ENCODE measurements at regions of chr10 and their contacts with region 1.

Region 1: DNA sequence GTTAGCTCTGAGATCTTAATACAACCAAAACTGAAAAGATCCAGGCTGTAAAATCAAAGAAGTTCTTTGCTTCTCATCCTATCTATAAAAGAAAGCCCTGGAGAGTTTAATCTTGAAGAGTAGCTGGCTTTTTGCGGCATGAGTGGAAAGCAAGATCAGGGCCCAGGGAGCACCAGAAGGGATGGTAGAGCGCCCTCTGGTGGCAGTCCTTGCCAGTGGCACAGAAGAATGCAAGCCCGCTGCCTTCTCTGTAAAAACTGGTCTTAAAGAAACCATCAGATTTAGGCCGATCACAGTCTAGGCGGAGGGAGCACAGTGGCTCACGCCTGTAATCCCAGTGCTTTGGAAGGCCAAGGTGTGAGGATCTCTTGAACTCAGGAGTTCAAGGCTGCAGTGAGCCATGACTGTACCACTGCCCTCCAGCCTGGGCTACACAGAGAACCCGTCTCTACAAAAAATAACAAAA is 35.6 kb downstream of the CPN1 start:
- DNase-seq: peak; percentile 88
- H3K4me3 ChIP-seq: no peak overlapping the region
- H3K27ac ChIP-seq: no peak overlapping the region
- H3K4me1 ChIP-seq: peaks cover 0 to 18% (median 4%) of the 10 kb centered on the region in 4 donors
- H3K27me3 ChIP-seq: no peaks in the 10 kb centered on the region
- CTCF ChIP-seq: peak; percentile 89 to 98 (median 96)
- EP300 ChIP-seq: no peak
- POLR2A ChIP-seq: no peak

Region 2: GRCh38 chr10:99845837-99846382 is 200.1 kb before region 1 on chr10:
- in situ Hi-C with region 1: loop called (anchors 5 to 10 kb)
- intact Hi-C with region 1: loop called (anchors 2 kb)
- DNase-seq: peak; percentile 79
- H3K4me3 ChIP-seq: peak overlapping the region in 2 of 4 donors; percentile 7 to 33
- H3K27ac ChIP-seq: peak overlapping the region in 2 of 4 donors; percentile 18 to 29
- H3K4me1 ChIP-seq: peaks cover 3 to 23% (median 6%) of the 10 kb centered on the region in 4 donors
- H3K27me3 ChIP-seq: no peaks in the 10 kb centered on the region
- CTCF ChIP-seq: peak; percentile 93 to 95 (median 94)
- EP300 ChIP-seq: no peak
- POLR2A ChIP-seq: no peak

Region 3: DNA sequence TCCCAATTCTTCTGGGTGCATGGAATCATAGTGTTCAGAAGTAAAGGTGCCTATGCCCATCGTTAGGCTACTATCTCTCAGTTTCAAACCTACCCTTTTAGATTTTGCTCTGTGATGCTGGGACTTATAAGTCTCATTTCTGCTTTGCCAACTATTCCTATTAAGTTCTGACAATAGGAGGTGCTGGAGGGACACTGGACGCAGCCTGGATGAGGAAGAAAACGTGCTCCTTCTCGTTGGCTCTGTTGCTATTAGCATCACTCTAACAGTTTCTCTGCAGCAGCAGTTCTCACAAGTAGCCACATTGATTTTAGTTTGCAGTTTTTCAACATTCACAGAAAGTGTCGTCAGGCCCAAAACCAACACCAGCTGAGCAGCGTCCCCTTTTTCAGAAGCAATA is 191.2 kb before region 1 on chr10:
- in situ Hi-C with region 1: loop called in 2 of 4 experiments (anchors 10 kb)
- intact Hi-C with region 1: no loop called
- DNase-seq: no peak
- H3K4me3 ChIP-seq: no peak overlapping the region
- H3K27ac ChIP-seq: no peak overlapping the region
- H3K4me1 ChIP-seq: peaks cover 0 to 5% (median under 1%) of the 10 kb centered on the region in 4 donors
- H3K27me3 ChIP-seq: no peaks in the 10 kb centered on the region
- CTCF ChIP-seq: peak in 3 of 5 experiments; percentile 17 to 28 (median 24)
- EP300 ChIP-seq: no peak
- POLR2A ChIP-seq: no peak

Region 4: DNA sequence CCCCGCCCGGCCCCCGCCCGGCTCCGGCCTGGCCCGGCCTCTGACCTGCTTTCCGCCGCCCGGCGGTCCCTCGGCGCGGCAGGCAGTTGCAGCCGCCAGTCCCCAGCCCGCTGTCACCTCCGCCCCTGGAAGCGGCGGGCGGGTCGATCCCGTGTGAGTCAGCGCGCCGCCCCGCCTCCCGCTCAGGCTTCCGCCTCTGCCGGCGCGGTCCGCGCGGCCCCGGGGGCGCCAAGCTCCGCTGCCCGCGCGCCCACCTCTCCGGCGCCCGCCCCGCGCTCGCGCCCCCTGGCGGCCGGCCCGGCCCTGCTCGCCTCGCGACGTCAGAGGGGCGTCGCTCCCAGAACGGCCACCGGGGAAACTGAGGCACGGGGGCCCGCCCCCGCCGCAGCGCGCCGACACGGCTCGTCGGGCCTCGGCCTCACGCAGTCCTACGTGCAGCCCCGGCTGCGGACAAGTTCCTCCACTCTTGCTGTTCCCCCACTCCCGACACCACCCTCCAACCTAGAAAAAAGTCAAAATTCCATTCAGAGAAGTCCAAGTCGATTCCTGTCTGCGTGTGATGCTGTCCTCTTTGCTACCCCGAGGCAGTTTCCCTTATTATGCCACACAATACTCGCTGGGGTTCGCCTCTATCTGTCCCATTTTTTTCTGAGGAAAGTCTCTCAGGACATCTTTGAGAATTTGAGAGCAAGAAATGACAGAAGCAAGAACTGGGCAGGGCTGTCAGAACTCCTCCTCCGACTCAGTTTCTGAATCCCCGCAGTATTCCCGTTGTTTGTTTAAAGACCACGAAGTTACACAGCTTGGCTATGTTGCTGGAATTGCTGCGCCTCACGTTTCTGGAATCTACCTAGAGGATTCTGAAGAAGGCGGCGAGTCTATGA is 36.0 kb before region 1 on chr10 and contains the start of gene DNMBP:
- in situ Hi-C with region 1: no loop called
- intact Hi-C with region 1: no loop called
- DNase-seq: peak; percentile 86
- H3K4me3 ChIP-seq: peak within 1 kb of the TSS; percentile 47 to 83 (median 56)
- H3K27ac ChIP-seq: peak within 1 kb of the TSS; percentile 79 to 85 (median 84)
- H3K4me1 ChIP-seq: peaks cover 9 to 45% (median 37%) of the 10 kb centered on the region in 4 donors
- H3K27me3 ChIP-seq: no peaks in the 10 kb centered on the region
- CTCF ChIP-seq: peak; percentile 31 to 58 (median 46)
- EP300 ChIP-seq: no peak
- POLR2A ChIP-seq: no peak
- total RNA-seq, gene DNMBP: 38.5 to 68.5 (median 48.0) TPM

Region 5: DNA sequence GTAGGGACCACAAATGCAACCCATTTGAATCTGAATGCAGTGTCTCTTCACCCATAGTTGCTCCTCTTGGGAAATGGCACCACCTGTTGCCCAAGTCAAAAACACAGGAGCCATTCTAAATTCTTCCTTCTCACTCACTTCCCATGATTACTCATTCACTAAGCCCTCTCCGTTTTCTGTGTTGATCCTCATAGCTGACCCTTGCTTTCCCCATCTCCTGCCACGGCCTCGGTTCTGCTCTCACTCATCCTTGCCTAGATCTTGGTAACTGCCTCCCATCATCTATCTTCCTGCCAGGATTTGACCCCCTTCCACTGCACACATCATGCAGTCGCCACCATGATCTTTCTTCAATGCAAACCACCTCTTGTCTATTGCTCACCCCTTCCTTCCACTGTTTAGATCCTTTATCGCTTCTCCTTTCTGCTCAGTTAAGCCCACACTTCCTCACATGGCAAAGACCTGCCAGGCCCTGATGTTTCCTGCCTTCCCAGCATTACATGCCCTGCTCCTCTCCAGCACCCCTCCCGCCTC is 54.7 kb after region 1 on chr10:
- in situ Hi-C with region 1: no loop called
- intact Hi-C with region 1: no loop called
- DNase-seq: no peak
- H3K4me3 ChIP-seq: no peak overlapping the region
- H3K27ac ChIP-seq: no peak overlapping the region
- H3K4me1 ChIP-seq: no peaks in the 10 kb centered on the region
- H3K27me3 ChIP-seq: peaks cover 7% of the 10 kb centered on the region
- CTCF ChIP-seq: no peak
- EP300 ChIP-seq: no peak
- POLR2A ChIP-seq: no peak

Measured in transverse colon (tissue), 4 donors.